ENCODE measurements at regions of chr10 and their contacts with region 1.

Region 1: DNA sequence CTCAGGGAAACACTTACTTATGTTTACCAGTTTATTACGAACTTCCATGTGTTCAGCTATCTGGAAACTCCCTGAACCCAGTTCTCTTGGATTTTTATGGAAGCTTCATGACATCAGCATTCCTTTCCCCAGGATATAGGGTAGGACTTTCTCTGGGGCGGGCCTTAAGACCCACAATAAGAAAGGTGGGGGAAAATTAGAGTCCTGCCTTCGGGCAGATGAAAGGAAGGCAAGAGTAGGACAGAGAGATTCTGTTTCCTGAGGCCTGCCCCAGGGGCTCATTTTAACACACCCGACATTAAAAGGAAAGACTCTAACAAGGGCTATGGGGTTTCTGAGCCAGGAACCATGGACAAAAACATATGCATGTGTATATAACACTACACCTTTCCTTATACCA is 85.7 kb downstream of the MAP3K8 start:
- DNase-seq: no peak
- ATAC-seq: no peak
- H3K4me3 ChIP-seq: no peak overlapping the region
- H3K4me3 Mint-ChIP-seq: no peak overlapping the region
- H3K27ac ChIP-seq: no peak overlapping the region
- H3K27ac Mint-ChIP-seq: no peak overlapping the region
- H3K4me1 ChIP-seq: no peaks in the 10 kb centered on the region
- H3K4me1 Mint-ChIP-seq: peaks cover 13% of the 10 kb centered on the region
- H3K27me3 ChIP-seq: no peaks in the 10 kb centered on the region
- H3K27me3 Mint-ChIP-seq: no peaks in the 10 kb centered on the region
- CTCF ChIP-seq: no peak

Region 2: DNA sequence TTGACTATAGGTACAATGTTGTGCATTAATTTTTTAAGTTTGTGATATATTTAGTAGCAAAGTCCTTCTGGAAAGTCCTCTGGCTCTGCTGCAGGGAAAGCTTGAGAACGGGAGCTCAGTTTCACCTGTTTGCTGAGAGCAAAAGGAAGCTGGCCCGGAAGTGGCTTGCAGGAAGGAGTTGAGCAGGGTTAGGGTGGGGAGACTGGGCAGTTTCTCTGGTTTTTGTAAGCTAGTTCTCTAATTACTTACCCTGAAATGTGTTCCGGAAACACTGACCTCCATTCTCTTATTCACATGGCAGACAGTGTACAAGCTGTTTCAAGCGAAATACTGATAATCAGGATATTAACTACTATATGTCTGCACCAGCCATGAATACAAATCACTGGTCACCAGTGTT is 63.4 kb before region 1 on chr10:
- CTCF ChIA-PET with region 1: no interaction called
- POLR2A ChIA-PET with region 1: no interaction called
- intact Hi-C with region 1: no loop called
- DNase-seq: peak; percentile 60
- ATAC-seq: peak; percentile 70
- H3K4me3 ChIP-seq: peak overlapping the region in 4 of 5 experiments; percentile 7 to 43 (median 26)
- H3K4me3 Mint-ChIP-seq: peak overlapping the region; percentile 42
- H3K27ac ChIP-seq: peak overlapping the region; percentile 58 to 65
- H3K27ac Mint-ChIP-seq: peak overlapping the region; percentile 86
- H3K4me1 ChIP-seq: peaks cover 43 to 48% of the 10 kb centered on the region in 2 donors
- H3K4me1 Mint-ChIP-seq: peaks cover 41% of the 10 kb centered on the region
- H3K27me3 ChIP-seq: no peaks in the 10 kb centered on the region
- H3K27me3 Mint-ChIP-seq: no peaks in the 10 kb centered on the region
- CTCF ChIP-seq: no peak

Region 3: GRCh38 chr10:30467651-30468338 is 51.8 kb before region 1 on chr10:
- CTCF ChIA-PET with region 1: interaction called, 3 read pairs
- POLR2A ChIA-PET with region 1: interaction called, 10 read pairs
- intact Hi-C with region 1: no loop called
- DNase-seq: peak; percentile 66
- ATAC-seq: peak; percentile 73
- H3K4me3 ChIP-seq: peak overlapping the region in 2 of 5 experiments; percentile 15 to 34
- H3K4me3 Mint-ChIP-seq: peak overlapping the region; percentile 35
- H3K27ac ChIP-seq: peak overlapping the region; percentile 24 to 39
- H3K27ac Mint-ChIP-seq: peak overlapping the region; percentile 66
- H3K4me1 ChIP-seq: peaks cover 21 to 22% of the 10 kb centered on the region in 2 donors
- H3K4me1 Mint-ChIP-seq: peaks cover 29% of the 10 kb centered on the region
- H3K27me3 ChIP-seq: no peaks in the 10 kb centered on the region
- H3K27me3 Mint-ChIP-seq: no peaks in the 10 kb centered on the region
- CTCF ChIP-seq: no peak